Psoas muscle (tissue), 8 donors: ENCODE measurements at regions of chr1 and their contacts with region 1.

Region 1: DNA sequence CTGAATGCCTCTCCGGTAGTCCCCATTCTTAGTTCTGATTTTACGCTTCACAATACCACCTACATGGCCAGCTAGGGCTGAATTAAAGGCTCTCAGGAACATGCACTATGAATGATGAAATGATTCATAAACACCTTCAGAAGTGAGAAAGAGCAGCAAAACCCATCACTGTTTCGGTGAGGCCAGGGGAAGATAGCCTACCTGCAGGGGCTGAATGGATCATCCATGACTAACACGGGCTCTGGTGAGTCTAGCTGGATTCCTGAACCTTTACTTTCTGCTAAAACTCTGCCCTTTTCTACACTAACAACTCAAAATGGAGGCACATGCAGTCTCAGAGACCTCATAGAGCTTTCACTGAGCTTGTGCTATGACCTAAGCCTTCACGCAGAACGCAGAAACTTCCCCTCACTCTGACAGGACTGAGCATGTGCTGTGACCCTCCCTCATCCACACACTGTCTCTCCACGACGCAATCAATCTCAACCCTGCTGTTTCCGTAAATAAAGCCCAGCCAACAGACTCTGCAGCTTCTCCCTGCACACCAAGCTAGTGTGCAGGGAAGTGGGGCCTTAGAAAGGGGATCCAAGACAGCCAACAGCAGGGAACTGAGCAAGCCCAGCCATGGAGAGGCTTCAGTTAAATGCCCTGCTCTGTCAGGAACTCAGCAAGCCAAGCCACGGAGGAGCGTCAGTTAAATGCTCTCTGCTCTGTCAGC is 207.8 kb downstream of the SLC45A1 start:
- DNase-seq: peak; percentile 75 to 87
- ATAC-seq: peak; percentile 96 to 98 (median 98)
- H3K4me3 ChIP-seq: peak overlapping the region; percentile 71
- H3K27ac ChIP-seq: peak overlapping the region; percentile 90
- H3K4me1 ChIP-seq: peaks cover 44% of the 10 kb centered on the region
- H3K27me3 ChIP-seq: no peaks in the 10 kb centered on the region
- CTCF ChIP-seq: no peak

Region 2: GRCh38 chr1:8423650-8424538 is 101.8 kb before region 1 on chr1:
- intact Hi-C with region 1: loop called (anchors 5 kb)
- DNase-seq: peak; percentile 55 to 74
- ATAC-seq: peak; percentile 25 to 52 (median 38)
- H3K4me3 ChIP-seq: peak overlapping the region; percentile 90
- H3K27ac ChIP-seq: peak overlapping the region; percentile 98
- H3K4me1 ChIP-seq: peaks cover 72% of the 10 kb centered on the region
- H3K27me3 ChIP-seq: no peaks in the 10 kb centered on the region
- CTCF ChIP-seq: no peak

Region 3: DNA sequence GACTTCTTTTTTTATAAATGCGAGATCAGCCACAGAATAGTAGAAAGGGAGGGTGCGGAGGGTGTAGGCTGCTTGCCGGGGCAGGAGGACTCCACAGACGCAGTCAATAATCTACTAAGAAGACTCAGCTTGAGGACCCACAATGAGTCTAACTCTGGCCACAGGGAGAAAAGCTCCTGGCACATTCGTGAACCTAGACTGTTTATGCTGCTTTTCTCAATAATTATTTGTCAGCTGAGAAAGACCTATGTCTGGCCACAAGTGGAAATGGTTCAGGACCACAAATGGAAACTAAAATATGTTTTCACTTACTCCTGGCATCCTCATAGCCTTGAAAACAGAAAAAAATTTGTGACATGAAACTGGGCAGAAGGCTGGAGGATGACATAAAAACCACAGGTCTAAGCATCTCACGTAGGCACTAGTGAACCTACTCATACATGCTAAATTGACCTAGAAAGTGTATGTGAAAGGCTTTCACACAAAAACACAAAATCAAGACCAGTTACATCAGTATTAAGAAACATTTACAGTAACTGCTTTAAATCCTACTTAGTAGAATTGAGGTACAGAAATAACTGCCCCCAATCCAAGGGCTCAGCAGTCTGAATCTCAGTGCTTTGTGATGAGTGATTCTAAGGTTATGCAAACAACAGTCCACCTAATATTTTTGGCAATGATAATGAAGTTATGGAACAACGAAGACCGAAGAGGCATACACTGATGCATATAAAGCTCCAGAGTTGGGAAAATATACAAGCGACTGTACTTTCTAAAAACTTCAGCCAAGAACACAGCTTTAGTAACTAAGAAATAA is 48.3 kb before region 1 on chr1:
- intact Hi-C with region 1: loop called in 1 of 2 experiments (anchors 5 kb)
- DNase-seq: no peak
- ATAC-seq: no peak
- H3K4me3 ChIP-seq: no peak overlapping the region
- H3K27ac ChIP-seq: peak overlapping the region; percentile 14
- H3K4me1 ChIP-seq: peaks cover 26% of the 10 kb centered on the region
- H3K27me3 ChIP-seq: no peaks in the 10 kb centered on the region
- CTCF ChIP-seq: no peak